ENCODE measurements at regions of chrX and their contacts with region 1.

Region 1: DNA sequence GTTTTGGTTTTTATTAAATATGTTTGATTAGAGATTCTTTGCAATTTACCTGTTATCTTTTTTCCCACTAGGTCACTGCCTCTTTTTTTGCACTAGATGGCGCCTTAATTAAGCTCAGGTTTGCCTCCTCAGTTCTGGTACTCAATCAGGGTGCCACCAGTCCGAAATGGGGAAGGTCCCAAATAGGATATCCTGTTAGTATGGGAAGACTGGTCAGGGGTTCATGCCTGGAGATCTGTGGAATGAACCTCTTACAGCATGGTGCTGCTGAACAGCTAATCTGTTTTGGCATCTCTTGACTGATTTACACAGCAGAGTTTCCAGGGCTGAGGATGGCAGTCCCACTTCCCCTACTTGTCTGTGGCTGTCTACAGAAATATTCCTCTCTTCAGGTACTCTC is 24.2 kb upstream of the VSIG1 start:
- DNase-seq: peak in 4 of 5 donors; percentile 24 to 49 (median 33)
- H3K4me3 ChIP-seq: peak overlapping the region; percentile 26 to 36
- H3K4me3 Mint-ChIP-seq: peak overlapping the region; percentile 79 to 95 (median 90)
- H3K27ac ChIP-seq: peak overlapping the region; percentile 44
- H3K27ac Mint-ChIP-seq: peak overlapping the region; percentile 76 to 99 (median 96)
- H3K4me1 ChIP-seq: peaks cover 72% of the 10 kb centered on the region
- H3K4me1 Mint-ChIP-seq: peaks cover 47 to 93% (median 73%) of the 10 kb centered on the region in 4 donors
- H3K27me3 ChIP-seq: no peaks in the 10 kb centered on the region
- H3K27me3 Mint-ChIP-seq: no peaks in the 10 kb centered on the region

Region 2: DNA sequence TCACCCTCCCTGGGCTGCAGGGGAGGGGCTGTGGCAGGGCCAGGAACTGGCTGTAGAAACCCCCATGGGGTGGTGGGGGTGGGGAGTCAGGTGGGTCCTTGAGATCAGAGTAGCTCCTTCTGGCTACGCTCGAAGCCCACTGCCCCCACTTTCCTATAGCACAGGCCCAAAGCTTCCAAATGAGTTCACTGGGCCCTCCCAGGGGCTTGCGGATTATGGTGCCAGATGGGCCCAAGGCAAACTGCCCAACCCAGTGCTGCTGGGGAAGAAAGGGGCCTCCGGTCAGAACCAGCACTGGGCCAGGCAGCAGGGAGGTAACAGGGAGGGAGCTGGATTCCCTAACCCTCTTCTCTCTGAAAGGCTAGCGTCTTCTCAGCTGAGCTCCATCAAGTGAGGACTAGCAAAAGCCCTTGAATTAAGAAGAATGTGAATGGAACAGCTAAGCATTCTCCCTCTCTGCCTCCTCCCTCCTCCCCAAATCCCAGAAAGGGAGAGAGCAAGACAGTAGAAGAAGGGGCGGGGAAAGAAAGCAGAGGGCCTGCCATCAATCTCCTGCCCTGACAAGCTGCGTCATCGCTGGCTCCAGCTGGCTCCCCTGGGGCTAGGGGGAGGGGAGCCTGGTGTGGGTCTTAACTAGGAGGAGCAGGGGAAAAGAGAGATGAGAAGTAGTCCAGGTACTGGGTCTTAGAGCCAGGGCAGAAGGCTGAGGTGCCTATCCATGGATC is 536.5 kb before region 1 on chrX:
- CTCF ChIA-PET with region 1: no interaction called
- POLR2A ChIA-PET with region 1: no interaction called
- intact Hi-C with region 1: no loop called
- DNase-seq: no peak
- H3K4me3 ChIP-seq: no peak overlapping the region
- H3K4me3 Mint-ChIP-seq: no peak overlapping the region
- H3K27ac ChIP-seq: no peak overlapping the region
- H3K27ac Mint-ChIP-seq: no peak overlapping the region
- H3K4me1 ChIP-seq: no peaks in the 10 kb centered on the region
- H3K4me1 Mint-ChIP-seq: peaks cover 0 to 2% (median 0%) of the 10 kb centered on the region in 4 donors
- H3K27me3 ChIP-seq: no peaks in the 10 kb centered on the region
- H3K27me3 Mint-ChIP-seq: peaks cover 0 to 4% of the 10 kb centered on the region in 2 donors

Region 3: GRCh38 chrX:108001174-108001814 is 19.3 kb before region 1 on chrX:
- CTCF ChIA-PET with region 1: interaction called, 37 read pairs
- POLR2A ChIA-PET with region 1: interaction called, 7 read pairs
- intact Hi-C with region 1: loop called (anchors 1 kb)
- DNase-seq: peak; percentile 37 to 63 (median 60)
- H3K4me3 ChIP-seq: no peak overlapping the region
- H3K4me3 Mint-ChIP-seq: peak overlapping the region in 5 of 8 donors; percentile 1 to 72 (median 27)
- H3K27ac ChIP-seq: no peak overlapping the region
- H3K27ac Mint-ChIP-seq: peak overlapping the region in 4 of 7 donors; percentile 42 to 80 (median 72)
- H3K4me1 ChIP-seq: no peaks in the 10 kb centered on the region
- H3K4me1 Mint-ChIP-seq: peaks cover 3 to 11% (median 6%) of the 10 kb centered on the region in 4 donors
- H3K27me3 ChIP-seq: no peaks in the 10 kb centered on the region
- H3K27me3 Mint-ChIP-seq: peaks cover 1 to 2% of the 10 kb centered on the region in 2 donors

Region 4: GRCh38 chrX:108091266-108091877 is 70.7 kb after region 1 on chrX and contains the starts of genes ATG4A and PSMD10:
- CTCF ChIA-PET with region 1: no interaction called
- POLR2A ChIA-PET with region 1: interaction called, 10 read pairs
- intact Hi-C with region 1: loop called (anchors 1 kb)
- DNase-seq: peak; percentile 86 to 96 (median 90)
- H3K4me3 ChIP-seq: peak within 1 kb of the TSS; percentile 48 to 75
- H3K4me3 Mint-ChIP-seq: no peak within 1 kb of the TSS
- H3K27ac ChIP-seq: peak within 1 kb of the TSS; percentile 81
- H3K27ac Mint-ChIP-seq: no peak within 1 kb of the TSS
- H3K4me1 ChIP-seq: peaks cover 22% of the 10 kb centered on the region
- H3K4me1 Mint-ChIP-seq: peaks cover 5 to 17% (median 7%) of the 10 kb centered on the region in 4 donors
- H3K27me3 ChIP-seq: no peaks in the 10 kb centered on the region
- H3K27me3 Mint-ChIP-seq: no peaks in the 10 kb centered on the region
- total RNA-seq, gene ATG4A: 7.6 to 8.1 TPM
- total RNA-seq, gene PSMD10: 29.0 to 32.6 TPM